HCT116 (cell line): ENCODE measurements at regions of chrX and their contacts with region 1.

Region 1: GRCh38 chrX:63686878-63687714 is 97.9 kb downstream of the ARHGEF9 start:
- DNase-seq: peak; percentile 3
- ATAC-seq: peak; percentile 72
- H3K4me3 ChIP-seq: no peak overlapping the region
- H3K27ac ChIP-seq: no peak overlapping the region
- H3K4me1 ChIP-seq: no peaks in the 10 kb centered on the region
- H3K27me3 ChIP-seq: no peaks in the 10 kb centered on the region
- CTCF ChIP-seq: peak; percentile 54 to 63 (median 63); a peak in 5 of 6 replicates
- POLR2A ChIP-seq: no peak
- RAD21 ChIP-seq: peak; percentile 63

Region 2: GRCh38 chrX:63050225-63050624 is 636.9 kb before region 1 on chrX:
- CTCF ChIA-PET with region 1: no interaction called
- POLR2A ChIA-PET with region 1: no interaction called
- RAD21 ChIA-PET with region 1: no interaction called
- intact Hi-C with region 1: loop called (anchors 5 kb)
- DNase-seq: peak; percentile 1
- ATAC-seq: peak; percentile 40; the same call in 1 of the 2 replicates
- H3K4me3 ChIP-seq: no peak overlapping the region
- H3K27ac ChIP-seq: no peak overlapping the region
- H3K4me1 ChIP-seq: no peaks in the 10 kb centered on the region
- H3K27me3 ChIP-seq: no peaks in the 10 kb centered on the region
- CTCF ChIP-seq: peak in 2 of 3 experiments; percentile 33 to 40; a peak in 3 of 6 replicates
- POLR2A ChIP-seq: no peak
- RAD21 ChIP-seq: no peak

Region 3: GRCh38 chrX:63402106-63402505 is 285.0 kb before region 1 on chrX:
- CTCF ChIA-PET with region 1: no interaction called
- POLR2A ChIA-PET with region 1: no interaction called
- RAD21 ChIA-PET with region 1: no interaction called
- intact Hi-C with region 1: no loop called
- DNase-seq: no peak
- ATAC-seq: no peak
- H3K4me3 ChIP-seq: no peak overlapping the region
- H3K27ac ChIP-seq: no peak overlapping the region
- H3K4me1 ChIP-seq: no peaks in the 10 kb centered on the region
- H3K27me3 ChIP-seq: no peaks in the 10 kb centered on the region
- CTCF ChIP-seq: no peak
- POLR2A ChIP-seq: no peak
- RAD21 ChIP-seq: no peak

Region 4: GRCh38 chrX:63581398-63581797 is 105.7 kb before region 1 on chrX:
- CTCF ChIA-PET with region 1: no interaction called
- POLR2A ChIA-PET with region 1: no interaction called
- RAD21 ChIA-PET with region 1: no interaction called
- intact Hi-C with region 1: no loop called
- DNase-seq: no peak
- ATAC-seq: no peak
- H3K4me3 ChIP-seq: no peak overlapping the region
- H3K27ac ChIP-seq: no peak overlapping the region
- H3K4me1 ChIP-seq: no peaks in the 10 kb centered on the region
- H3K27me3 ChIP-seq: no peaks in the 10 kb centered on the region
- CTCF ChIP-seq: no peak
- POLR2A ChIP-seq: no peak
- RAD21 ChIP-seq: no peak

Region 5: DNA sequence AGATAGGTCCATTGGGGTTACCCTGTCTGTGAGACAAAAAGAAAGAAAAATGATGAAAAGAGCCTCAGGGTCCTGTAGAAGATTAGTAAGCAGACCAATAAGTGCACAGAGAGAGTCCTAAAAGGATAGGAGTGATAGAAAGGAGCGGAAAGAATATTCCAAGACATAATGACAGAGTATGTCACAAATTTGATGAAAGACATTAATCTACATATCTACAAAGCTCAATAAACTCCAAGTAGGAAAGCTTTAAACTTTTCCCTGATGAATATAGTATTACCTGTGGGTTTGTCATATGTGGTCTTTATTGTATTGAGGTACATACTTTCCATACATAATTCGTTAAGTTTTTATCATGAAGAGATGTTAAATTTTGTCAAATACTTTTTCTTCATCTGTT is 634.4 kb after region 1 on chrX:
- CTCF ChIA-PET with region 1: no interaction called
- POLR2A ChIA-PET with region 1: no interaction called
- RAD21 ChIA-PET with region 1: no interaction called
- intact Hi-C with region 1: no loop called
- DNase-seq: no peak
- ATAC-seq: no peak
- H3K4me3 ChIP-seq: no peak overlapping the region
- H3K27ac ChIP-seq: no peak overlapping the region
- H3K4me1 ChIP-seq: no peaks in the 10 kb centered on the region
- H3K27me3 ChIP-seq: no peaks in the 10 kb centered on the region
- CTCF ChIP-seq: no peak
- POLR2A ChIP-seq: no peak
- RAD21 ChIP-seq: no peak